ENCODE measurements at regions of chr10 and their contacts with region 1.

Region 1: DNA sequence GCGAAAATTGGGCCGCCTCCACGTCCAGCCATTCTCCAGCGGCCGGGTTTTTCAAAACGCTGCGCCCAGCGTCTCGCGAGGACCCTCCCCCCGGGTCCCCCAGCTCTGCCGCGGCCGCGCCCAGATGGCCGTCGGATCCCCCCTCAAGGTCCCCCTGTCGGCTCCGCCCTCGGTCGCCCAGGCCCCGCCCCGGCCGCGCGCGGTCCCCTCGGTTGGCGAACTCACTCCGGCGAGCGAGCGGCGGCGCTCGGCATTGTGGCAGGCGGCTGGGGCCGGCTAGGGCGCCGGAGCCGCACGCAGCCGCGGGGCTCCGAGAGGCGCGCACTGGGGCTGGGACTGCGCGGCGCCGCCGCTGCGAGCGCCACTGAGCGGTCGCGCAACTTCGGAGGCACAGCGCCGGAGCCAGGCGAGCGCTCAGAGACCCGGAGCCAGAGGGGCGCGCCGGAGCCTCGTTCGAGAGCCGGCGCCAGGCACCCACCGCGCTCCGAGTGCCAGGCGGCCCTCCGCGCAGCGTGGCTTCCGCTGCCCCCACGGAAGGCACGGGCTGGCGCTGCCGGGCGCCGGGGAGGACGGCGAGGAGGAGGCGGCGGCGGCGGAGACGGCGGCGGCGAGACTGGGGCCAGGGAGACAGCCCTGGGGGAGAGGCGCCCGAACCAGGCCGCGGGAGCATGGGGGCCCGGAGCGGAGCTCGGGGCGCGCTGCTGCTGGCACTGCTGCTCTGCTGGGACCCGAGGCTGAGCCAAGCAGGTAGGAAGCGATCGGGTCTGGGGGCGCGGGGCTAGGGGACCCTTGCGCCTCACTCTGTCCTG is at the start of gene UNC5B:
- DNase-seq: peak; percentile 85
- ATAC-seq: peak; percentile 94
- H3K4me3 ChIP-seq: peak within 1 kb of the TSS; percentile 63
- H3K27ac ChIP-seq: peak within 1 kb of the TSS; percentile 11; the same call in 1 of the 2 replicates
- H3K4me1 ChIP-seq: peaks cover 9% of the 10 kb centered on the region
- H3K27me3 ChIP-seq: peaks cover 26% of the 10 kb centered on the region
- CTCF ChIP-seq: peak; percentile 45
- POLR2A ChIP-seq: peak; percentile 88
- RAD21 ChIP-seq: peak; percentile 24
- total RNA-seq, gene UNC5B: 1.4 and 1.6 TPM in 2 replicates

Region 2: DNA sequence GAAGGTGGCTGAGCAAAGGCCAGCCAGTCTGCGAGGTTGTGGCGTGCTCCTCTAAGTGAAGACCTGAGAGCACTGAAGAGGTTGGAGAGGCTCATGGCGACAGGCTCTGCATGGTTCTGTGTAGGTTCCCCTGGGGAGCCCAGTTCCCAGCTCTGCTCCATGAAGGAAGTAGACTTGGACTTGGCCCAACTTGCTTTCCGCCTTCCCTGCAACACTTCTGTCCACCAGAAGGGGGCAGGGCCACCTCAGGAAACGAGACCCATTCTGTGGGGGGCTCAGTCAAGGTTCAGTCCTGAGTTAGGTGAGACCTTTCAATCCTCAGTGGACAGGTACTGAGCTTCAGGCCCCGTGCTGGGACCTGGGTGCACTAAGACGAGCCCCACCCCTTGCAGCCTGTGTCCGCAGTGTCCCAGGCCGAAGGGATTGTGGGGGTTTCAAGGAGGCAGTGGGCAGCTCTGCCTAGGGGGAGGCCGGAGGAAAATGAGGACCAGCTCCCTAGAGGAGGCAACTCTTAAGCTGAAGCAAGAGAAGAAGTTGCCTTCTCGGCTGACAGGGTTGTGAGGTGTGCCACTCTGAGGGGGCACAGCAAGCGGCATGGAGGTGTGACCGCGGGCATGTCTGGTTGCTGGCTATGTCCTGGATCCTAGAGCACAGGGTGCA is 309.1 kb before region 1 on chr10:
- CTCF ChIA-PET with region 1: no interaction called
- POLR2A ChIA-PET with region 1: no interaction called
- dilution Hi-C with region 1: no loop called
- in situ Hi-C with region 1: no loop called
- intact Hi-C with region 1: loop called (anchors 1 kb)
- DNase-seq: peak; percentile 44
- ATAC-seq: peak; percentile 86
- H3K4me3 ChIP-seq: no peak overlapping the region
- H3K27ac ChIP-seq: no peak overlapping the region
- H3K4me1 ChIP-seq: no peaks in the 10 kb centered on the region
- H3K27me3 ChIP-seq: peaks cover 63% of the 10 kb centered on the region
- CTCF ChIP-seq: peak; percentile 79
- POLR2A ChIP-seq: no peak
- RAD21 ChIP-seq: peak; percentile 70

Region 3: GRCh38 chr10:71234970-71235685 is 22.6 kb after region 1 on chr10:
- CTCF ChIA-PET with region 1: no interaction called
- POLR2A ChIA-PET with region 1: no interaction called
- dilution Hi-C with region 1: no loop called
- in situ Hi-C with region 1: no loop called
- intact Hi-C with region 1: loop called (anchors 1 kb)
- DNase-seq: peak; percentile 49
- ATAC-seq: peak; percentile 79
- H3K4me3 ChIP-seq: no peak overlapping the region
- H3K27ac ChIP-seq: peak overlapping the region; percentile 45
- H3K4me1 ChIP-seq: peaks cover 17% of the 10 kb centered on the region
- H3K27me3 ChIP-seq: no peaks in the 10 kb centered on the region
- CTCF ChIP-seq: no peak
- POLR2A ChIP-seq: no peak
- RAD21 ChIP-seq: no peak

Region 4: GRCh38 chr10:71268247-71268691 is 55.7 kb after region 1 on chr10:
- CTCF ChIA-PET with region 1: interaction called, 3 read pairs
- POLR2A ChIA-PET with region 1: interaction called, 10 read pairs
- dilution Hi-C with region 1: no loop called
- in situ Hi-C with region 1: loop called (anchors 5 kb)
- intact Hi-C with region 1: loop called (anchors 1 kb)
- DNase-seq: peak; percentile 63
- ATAC-seq: peak; percentile 19; the same call in 1 of the 2 replicates
- H3K4me3 ChIP-seq: no peak overlapping the region
- H3K27ac ChIP-seq: peak overlapping the region; percentile 1; the same call in 1 of the 2 replicates
- H3K4me1 ChIP-seq: peaks cover 34% of the 10 kb centered on the region
- H3K27me3 ChIP-seq: no peaks in the 10 kb centered on the region
- CTCF ChIP-seq: peak; percentile 62
- POLR2A ChIP-seq: no peak
- RAD21 ChIP-seq: peak; percentile 61

Measured in IMR-90 (cell line).